Activated CD8-positive, alpha-beta T cell treated with anti-CD3 and anti-CD28 coated beads, Interleukin-2, amount 10 ng/mL, durations not matched to agents 7 days and 5 days (primary cell): ENCODE measurements at regions of chr13 and their contacts with region 1.

Region 1: DNA sequence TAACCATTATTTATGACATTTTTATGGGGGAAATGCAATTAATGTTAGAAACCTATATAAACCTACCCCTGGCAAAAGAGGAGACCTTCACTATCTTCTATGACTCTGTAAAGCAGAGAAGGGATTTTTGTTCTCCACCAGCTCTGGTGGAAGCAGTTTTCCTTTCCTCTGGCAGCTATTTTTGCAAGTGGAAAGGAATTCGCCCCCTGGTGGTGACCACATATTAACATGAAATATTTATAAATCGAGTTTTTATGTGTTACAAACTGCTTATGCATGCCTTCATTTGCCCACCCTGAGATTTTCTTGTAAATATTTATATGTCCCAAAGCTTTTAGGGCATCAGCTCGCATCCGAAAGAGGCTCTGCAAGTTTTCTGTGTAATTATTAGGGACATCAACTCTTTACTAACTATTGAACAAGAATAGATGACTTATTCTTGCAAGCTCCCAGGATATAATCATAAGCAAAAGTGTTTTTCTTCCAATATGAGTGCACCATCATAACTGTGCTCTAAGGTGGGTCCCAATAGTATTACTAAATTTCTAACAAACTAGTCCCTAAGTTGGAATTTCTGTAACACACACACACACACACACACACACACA is 62.4 kb downstream of the SERTM1 start:
- DNase-seq: peak; percentile 49
- ATAC-seq: no peak
- H3K4me3 Mint-ChIP-seq: no peak overlapping the region
- H3K27ac Mint-ChIP-seq: no peak overlapping the region
- H3K4me1 Mint-ChIP-seq: no peaks in the 10 kb centered on the region
- H3K27me3 Mint-ChIP-seq: peaks cover 8% of the 10 kb centered on the region

Region 2: GRCh38 chr13:36282818-36283445 is 453.3 kb before region 1 on chr13:
- CTCF ChIA-PET with region 1: interaction called, 11 read pairs
- POLR2A ChIA-PET with region 1: no interaction called
- DNase-seq: no peak
- ATAC-seq: no peak
- H3K4me3 Mint-ChIP-seq: no peak overlapping the region
- H3K27ac Mint-ChIP-seq: no peak overlapping the region
- H3K4me1 Mint-ChIP-seq: peaks cover 2% of the 10 kb centered on the region
- H3K27me3 Mint-ChIP-seq: peaks cover 19% of the 10 kb centered on the region

Region 3: DNA sequence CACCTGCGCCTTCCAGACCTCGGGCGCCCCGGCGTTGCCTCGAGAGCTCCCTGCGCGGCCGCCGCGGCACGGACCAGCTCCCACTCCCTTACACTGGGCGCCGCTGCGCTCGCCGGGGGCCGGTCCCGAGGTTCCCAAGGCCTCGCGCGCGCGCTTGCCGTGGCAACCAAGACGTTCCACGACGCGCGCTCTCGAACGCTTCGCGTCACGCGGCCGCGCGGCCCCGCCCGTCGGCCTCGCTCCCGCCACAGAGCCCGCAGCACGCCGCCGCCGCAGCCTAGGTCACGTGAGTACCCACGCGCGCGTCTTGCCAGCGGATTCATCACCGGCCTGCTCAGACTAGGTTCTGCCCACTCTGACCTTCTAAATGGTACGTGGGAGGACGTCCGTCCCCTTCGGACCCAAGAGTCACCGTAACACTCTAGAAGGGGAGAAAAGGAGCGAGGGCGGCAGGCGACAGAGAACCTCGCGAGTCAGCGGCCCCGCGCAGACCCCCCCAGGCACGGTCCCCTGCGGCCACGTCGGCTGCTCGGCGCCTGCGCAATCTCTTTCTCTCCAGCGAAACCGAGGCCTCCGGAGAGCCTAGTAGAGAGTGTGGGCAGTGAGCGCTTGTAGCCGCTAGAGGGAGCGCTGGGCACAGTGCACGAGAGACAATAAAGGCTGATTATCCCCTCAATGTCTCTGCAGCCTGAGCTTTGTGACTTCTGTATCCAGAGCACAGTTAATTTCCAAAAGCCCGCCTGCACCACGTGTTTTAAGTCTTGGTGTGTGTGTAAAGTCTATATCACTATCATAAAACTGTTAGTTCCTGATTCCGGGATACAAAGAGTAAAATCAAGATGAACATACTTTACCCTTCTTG is 389.8 kb before region 1 on chr13 and contains the start of gene SPART:
- CTCF ChIA-PET with region 1: interaction called, 13 read pairs
- POLR2A ChIA-PET with region 1: no interaction called
- DNase-seq: peak; percentile 93
- ATAC-seq: peak; percentile 93
- H3K4me3 Mint-ChIP-seq: peak within 1 kb of the TSS; percentile 79
- H3K27ac Mint-ChIP-seq: peak within 1 kb of the TSS; percentile 87
- H3K4me1 Mint-ChIP-seq: peaks cover 24% of the 10 kb centered on the region
- H3K27me3 Mint-ChIP-seq: no peaks in the 10 kb centered on the region
- total RNA-seq, gene SPART: 16.3 to 16.6 TPM

Region 4: DNA sequence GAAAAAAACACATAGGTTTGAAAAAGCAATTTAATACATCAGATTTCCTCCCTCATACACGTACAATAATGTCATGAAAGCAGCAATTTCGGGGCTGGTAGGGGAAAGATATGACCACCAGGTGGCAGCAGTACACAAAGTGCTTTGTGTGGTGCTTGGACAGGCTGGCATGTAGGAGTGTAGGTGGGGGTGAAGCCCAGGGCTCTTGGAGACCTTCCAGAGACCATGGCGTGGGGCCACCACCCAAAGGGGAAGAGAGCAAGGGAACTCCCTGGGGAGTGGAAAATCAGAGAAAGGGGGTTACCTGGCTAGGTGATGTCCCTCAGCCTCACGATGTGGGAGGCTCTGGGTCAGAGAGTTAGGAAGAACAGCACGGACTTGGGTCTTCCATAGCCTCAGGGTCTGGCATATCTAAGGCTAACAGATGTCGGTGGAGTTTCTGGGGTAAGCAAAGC is 315.8 kb before region 1 on chr13:
- CTCF ChIA-PET with region 1: interaction called, 17 read pairs
- POLR2A ChIA-PET with region 1: no interaction called
- DNase-seq: peak; percentile 83
- ATAC-seq: peak; percentile 96
- H3K4me3 Mint-ChIP-seq: no peak overlapping the region
- H3K27ac Mint-ChIP-seq: no peak overlapping the region
- H3K4me1 Mint-ChIP-seq: peaks cover 25% of the 10 kb centered on the region
- H3K27me3 Mint-ChIP-seq: peaks cover 37% of the 10 kb centered on the region

Region 5: GRCh38 chr13:36453516-36453915 is 282.7 kb before region 1 on chr13:
- CTCF ChIA-PET with region 1: interaction called, 18 read pairs
- POLR2A ChIA-PET with region 1: no interaction called
- DNase-seq: no peak
- ATAC-seq: no peak
- H3K4me3 Mint-ChIP-seq: no peak overlapping the region
- H3K27ac Mint-ChIP-seq: no peak overlapping the region
- H3K4me1 Mint-ChIP-seq: peaks cover 11% of the 10 kb centered on the region
- H3K27me3 Mint-ChIP-seq: peaks cover 16% of the 10 kb centered on the region